Posterior vena cava (tissue), 2 donors: ENCODE measurements at regions of chr20 and their contacts with region 1.

Region 1: GRCh38 chr20:54416770-54417169 is 58.6 kb upstream of the DOK5 start:
- DNase-seq: no peak

Region 2: DNA sequence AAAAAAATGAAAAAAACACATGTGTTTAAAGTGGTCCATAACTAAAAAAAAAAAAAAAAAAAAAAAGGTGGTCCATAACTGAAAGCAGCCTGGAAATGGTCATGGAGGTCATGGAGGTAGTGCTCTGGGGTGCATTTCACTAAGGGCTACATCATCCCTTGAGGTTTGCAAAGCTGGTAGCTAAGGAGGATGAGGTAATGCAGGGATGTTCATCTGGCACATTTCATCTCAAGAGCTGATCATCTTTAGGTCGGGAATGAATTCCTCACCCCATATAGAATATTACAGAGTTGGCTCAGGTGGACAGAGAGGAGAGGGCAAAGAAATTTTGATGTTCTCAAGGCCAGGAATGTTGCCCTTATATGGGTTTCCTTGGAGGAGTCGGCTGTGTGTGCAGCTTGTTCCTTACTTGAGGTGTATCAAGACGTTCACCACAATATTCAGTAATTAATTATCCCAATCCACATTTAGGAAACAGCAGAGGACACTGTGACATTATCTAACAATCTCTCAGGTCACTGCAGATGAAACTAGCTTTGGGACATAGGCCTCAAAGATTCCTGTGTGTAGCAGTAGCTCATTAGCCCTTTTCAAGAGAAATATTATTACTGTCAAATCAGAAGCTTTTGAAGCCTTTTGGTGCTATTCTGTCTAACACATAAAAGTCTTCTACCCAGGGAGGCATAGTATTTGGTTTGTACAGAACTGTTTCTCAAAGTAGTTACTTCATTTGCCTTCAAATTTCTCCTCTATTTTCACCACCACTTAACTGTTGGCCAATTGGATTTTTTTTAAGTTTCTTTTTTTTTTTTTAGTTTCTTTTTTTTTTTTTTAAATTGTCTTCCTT is 289.7 kb before region 1 on chr20:
- intact Hi-C with region 1: loop called in 1 of 2 experiments (anchors 5 kb)
- DNase-seq: no peak

Region 3: DNA sequence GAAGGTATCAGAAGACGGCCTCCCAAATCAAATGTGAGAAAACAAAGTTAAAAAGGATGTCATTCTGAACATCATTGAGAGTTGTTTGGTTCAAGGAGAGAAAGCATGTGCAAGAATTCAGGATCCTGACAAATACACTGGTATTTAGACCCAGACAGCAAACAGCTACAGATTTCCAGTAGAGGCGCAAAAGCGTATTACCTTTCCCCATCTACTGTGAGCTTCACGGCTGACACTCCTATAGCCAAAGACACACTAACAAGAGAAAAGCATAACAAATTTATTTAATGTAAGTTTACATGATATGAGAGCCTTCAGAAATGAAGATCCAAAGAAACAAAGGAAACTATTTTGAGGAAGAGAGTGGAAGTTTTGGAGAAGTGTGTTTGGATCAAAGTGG is 32.4 kb after region 1 on chr20:
- intact Hi-C with region 1: no loop called
- DNase-seq: no peak

Region 4: GRCh38 chr20:54475334-54476168 is 58.8 kb after region 1 on chr20 and contains the start of gene DOK5:
- intact Hi-C with region 1: no loop called
- DNase-seq: peak; percentile 80
- total RNA-seq, gene DOK5: 4.4 to 6.1 TPM